CD4-positive, alpha-beta T cell (primary cell): ENCODE measurements at regions of chr9 and their contacts with region 1.

Region 1: DNA sequence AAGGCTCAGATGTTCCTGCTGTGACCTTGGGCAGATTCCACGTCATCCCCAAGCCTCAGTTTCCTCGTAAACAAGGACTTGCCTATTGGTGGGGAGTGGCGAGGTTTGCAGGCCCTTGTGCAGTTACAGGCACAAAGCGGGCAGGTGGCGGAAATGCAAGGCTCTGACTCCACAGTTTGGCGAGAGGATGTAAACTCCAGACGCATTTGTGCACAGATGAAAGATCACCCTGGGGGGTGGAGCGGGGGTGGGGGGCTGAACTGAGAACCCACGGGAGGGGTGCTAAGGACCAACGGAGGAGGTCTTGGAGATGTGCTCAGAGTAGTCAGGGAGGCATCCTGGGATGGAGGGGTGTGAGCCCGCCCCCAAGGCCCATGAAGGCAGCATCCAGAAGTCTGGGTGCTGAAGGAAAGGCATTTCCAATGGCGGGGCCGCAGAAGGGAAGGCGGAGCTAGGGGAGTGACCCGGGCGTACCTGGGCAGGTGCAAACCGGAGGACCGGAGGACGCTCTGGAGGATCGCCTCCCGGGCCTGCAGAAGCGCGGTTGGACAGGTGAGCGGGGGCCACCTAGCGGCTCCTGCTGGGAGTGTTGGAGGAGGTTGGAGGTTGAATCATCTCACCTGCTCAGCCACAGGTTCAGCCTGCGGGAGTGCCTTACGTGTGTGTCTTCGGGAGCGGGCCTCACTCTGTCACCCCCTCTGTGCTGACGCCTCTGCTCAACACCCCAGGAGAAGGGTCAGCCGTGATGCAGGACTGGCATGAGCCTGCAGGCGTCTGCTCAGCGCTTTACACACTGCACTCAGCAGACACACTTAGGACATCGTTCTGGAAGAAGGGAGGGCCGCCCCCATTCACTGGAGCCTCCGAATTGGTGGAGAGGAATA is 1.9 kb upstream of the FIBCD1 start:
- DNase-seq: peak; percentile 55 to 77 (median 66)
- ATAC-seq: peak; percentile 95
- H3K4me3 ChIP-seq: no peak overlapping the region
- H3K4me3 Mint-ChIP-seq: no peak overlapping the region
- H3K27ac ChIP-seq: no peak overlapping the region
- H3K27ac Mint-ChIP-seq: no peak overlapping the region
- H3K4me1 ChIP-seq: peaks cover 11% of the 10 kb centered on the region
- H3K4me1 Mint-ChIP-seq: peaks cover 9% of the 10 kb centered on the region
- H3K27me3 ChIP-seq: peaks cover 35 to 55% of the 10 kb centered on the region in 2 experiments
- H3K27me3 Mint-ChIP-seq: peaks cover 59% of the 10 kb centered on the region
- CTCF ChIP-seq: peak; percentile 89

Region 2: DNA sequence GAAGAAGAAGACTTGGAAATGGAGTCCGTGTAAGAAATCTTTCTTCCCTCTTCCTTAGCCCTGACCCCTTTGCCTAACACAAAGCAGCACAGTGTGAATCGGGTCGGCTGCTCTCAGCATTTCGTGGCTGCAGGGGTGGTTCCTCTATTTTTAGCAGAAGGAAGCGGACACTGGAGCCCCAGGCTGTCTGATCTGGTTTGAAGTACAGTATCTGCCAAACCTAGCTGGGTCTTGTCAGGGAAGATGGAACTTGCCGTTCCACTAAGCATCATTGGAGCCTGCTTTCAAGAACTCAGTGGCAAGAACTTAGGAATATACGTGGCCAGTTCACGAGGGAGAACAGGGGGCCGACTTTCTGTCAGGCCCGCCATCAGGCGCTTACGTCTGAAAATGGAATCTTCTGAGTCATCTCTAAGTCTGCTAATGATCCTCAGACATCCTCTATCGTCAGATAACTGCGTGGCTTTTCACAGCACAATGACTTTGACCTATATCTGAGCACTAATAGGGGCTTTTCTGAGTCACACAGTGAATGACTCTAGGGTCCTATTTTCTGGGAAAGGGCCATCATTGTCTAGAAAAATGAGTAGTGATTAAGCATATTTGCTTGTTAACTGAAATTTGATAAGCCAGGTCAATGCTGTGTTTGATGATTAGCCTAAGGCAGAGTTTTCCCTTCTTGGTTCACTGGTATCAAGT is 812.1 kb before region 1 on chr9:
- CTCF ChIA-PET with region 1: no interaction called
- POLR2A ChIA-PET with region 1: no interaction called
- intact Hi-C with region 1: no loop called
- DNase-seq: peak; percentile 17 to 86 (median 44)
- ATAC-seq: peak; percentile 60
- H3K4me3 ChIP-seq: peak overlapping the region; percentile 24
- H3K4me3 Mint-ChIP-seq: peak overlapping the region; percentile 71
- H3K27ac ChIP-seq: peak overlapping the region; percentile 83 to 95
- H3K27ac Mint-ChIP-seq: peak overlapping the region; percentile 98
- H3K4me1 ChIP-seq: peaks cover 60% of the 10 kb centered on the region
- H3K4me1 Mint-ChIP-seq: peaks cover 57% of the 10 kb centered on the region
- H3K27me3 ChIP-seq: no peaks in the 10 kb centered on the region
- H3K27me3 Mint-ChIP-seq: no peaks in the 10 kb centered on the region
- CTCF ChIP-seq: no peak

Region 3: GRCh38 chr9:130461218-130461630 is 479.7 kb before region 1 on chr9:
- CTCF ChIA-PET with region 1: no interaction called
- POLR2A ChIA-PET with region 1: no interaction called
- intact Hi-C with region 1: loop called in 1 of 2 experiments (anchors 1 kb)
- DNase-seq: peak; percentile 52 to 82 (median 66)
- ATAC-seq: peak; percentile 55
- H3K4me3 ChIP-seq: no peak overlapping the region
- H3K4me3 Mint-ChIP-seq: no peak overlapping the region
- H3K27ac ChIP-seq: no peak overlapping the region
- H3K27ac Mint-ChIP-seq: no peak overlapping the region
- H3K4me1 ChIP-seq: peaks cover 4% of the 10 kb centered on the region
- H3K4me1 Mint-ChIP-seq: no peaks in the 10 kb centered on the region
- H3K27me3 ChIP-seq: peaks cover 22 to 25% of the 10 kb centered on the region in 2 experiments
- H3K27me3 Mint-ChIP-seq: peaks cover 33% of the 10 kb centered on the region
- CTCF ChIP-seq: peak; percentile 90

Region 4: GRCh38 chr9:130607640-130608420 is 333.1 kb before region 1 on chr9:
- CTCF ChIA-PET with region 1: no interaction called
- POLR2A ChIA-PET with region 1: no interaction called
- intact Hi-C with region 1: no loop called
- DNase-seq: no peak
- ATAC-seq: no peak
- H3K4me3 ChIP-seq: no peak overlapping the region
- H3K4me3 Mint-ChIP-seq: no peak overlapping the region
- H3K27ac ChIP-seq: no peak overlapping the region
- H3K27ac Mint-ChIP-seq: no peak overlapping the region
- H3K4me1 ChIP-seq: no peaks in the 10 kb centered on the region
- H3K4me1 Mint-ChIP-seq: no peaks in the 10 kb centered on the region
- H3K27me3 ChIP-seq: no peaks in the 10 kb centered on the region
- H3K27me3 Mint-ChIP-seq: no peaks in the 10 kb centered on the region
- CTCF ChIP-seq: no peak

Region 5: GRCh38 chr9:130707225-130707976 is 233.5 kb before region 1 on chr9:
- CTCF ChIA-PET with region 1: no interaction called
- POLR2A ChIA-PET with region 1: interaction called, 4 read pairs
- intact Hi-C with region 1: loop called (anchors 1 kb)
- DNase-seq: peak; percentile 49 to 88 (median 68)
- ATAC-seq: peak; percentile 63
- H3K4me3 ChIP-seq: no peak overlapping the region
- H3K4me3 Mint-ChIP-seq: no peak overlapping the region
- H3K27ac ChIP-seq: no peak overlapping the region
- H3K27ac Mint-ChIP-seq: peak overlapping the region; percentile 2
- H3K4me1 ChIP-seq: peaks cover 5% of the 10 kb centered on the region
- H3K4me1 Mint-ChIP-seq: peaks cover 12% of the 10 kb centered on the region
- H3K27me3 ChIP-seq: no peaks in the 10 kb centered on the region
- H3K27me3 Mint-ChIP-seq: no peaks in the 10 kb centered on the region
- CTCF ChIP-seq: peak; percentile 87

Region 6: GRCh38 chr9:130770679-130771442 is 170.1 kb before region 1 on chr9:
- CTCF ChIA-PET with region 1: no interaction called
- POLR2A ChIA-PET with region 1: no interaction called
- intact Hi-C with region 1: loop called in 1 of 2 experiments (anchors 1 kb)
- DNase-seq: peak in 3 of 14 experiments; percentile 27 to 54 (median 50)
- ATAC-seq: peak; percentile 64
- H3K4me3 ChIP-seq: no peak overlapping the region
- H3K4me3 Mint-ChIP-seq: no peak overlapping the region
- H3K27ac ChIP-seq: no peak overlapping the region
- H3K27ac Mint-ChIP-seq: no peak overlapping the region
- H3K4me1 ChIP-seq: peaks cover 8% of the 10 kb centered on the region
- H3K4me1 Mint-ChIP-seq: peaks cover 43% of the 10 kb centered on the region
- H3K27me3 ChIP-seq: no peaks in the 10 kb centered on the region
- H3K27me3 Mint-ChIP-seq: no peaks in the 10 kb centered on the region
- CTCF ChIP-seq: peak; percentile 62

Region 7: DNA sequence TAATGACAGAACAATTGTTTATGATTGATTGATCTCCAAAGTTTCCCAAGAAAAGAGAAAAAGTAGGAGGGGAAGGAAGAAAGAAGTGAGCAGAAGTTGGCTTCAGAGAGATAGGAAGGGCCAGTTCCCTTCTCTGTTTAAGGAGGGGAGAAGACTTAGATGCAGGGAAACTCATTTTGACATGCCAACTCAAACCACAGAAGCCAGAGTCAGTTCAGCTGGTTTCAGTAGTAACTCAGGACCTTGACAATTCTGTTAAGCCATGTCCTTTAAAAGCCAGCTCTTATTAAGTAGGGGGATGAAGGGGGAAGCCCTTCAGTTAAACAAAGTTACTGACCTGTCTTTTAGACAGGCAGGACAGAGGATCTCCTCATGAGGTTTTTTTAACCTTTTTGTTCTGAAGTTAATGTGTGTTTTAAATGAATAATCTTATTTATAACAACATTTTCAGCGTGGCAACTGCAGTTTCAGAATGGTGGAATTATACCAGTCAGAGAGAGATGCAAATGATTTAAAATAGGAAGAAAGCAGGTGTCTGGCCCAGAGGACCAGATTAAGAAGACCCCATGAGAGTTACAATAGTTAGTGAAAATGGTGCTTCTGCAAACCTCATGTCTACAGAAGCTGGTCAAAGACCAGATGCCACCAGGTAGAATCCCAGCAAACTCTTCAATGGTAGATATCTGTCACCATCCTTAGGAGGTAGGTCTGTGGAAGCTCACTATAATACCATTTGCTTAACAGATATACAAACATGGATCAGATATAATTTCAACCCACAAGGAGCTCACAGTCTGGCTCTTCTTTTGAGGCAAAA is 135.2 kb before region 1 on chr9:
- CTCF ChIA-PET with region 1: no interaction called
- POLR2A ChIA-PET with region 1: no interaction called
- intact Hi-C with region 1: no loop called
- DNase-seq: no peak
- ATAC-seq: no peak
- H3K4me3 ChIP-seq: no peak overlapping the region
- H3K4me3 Mint-ChIP-seq: no peak overlapping the region
- H3K27ac ChIP-seq: no peak overlapping the region
- H3K27ac Mint-ChIP-seq: no peak overlapping the region
- H3K4me1 ChIP-seq: no peaks in the 10 kb centered on the region
- H3K4me1 Mint-ChIP-seq: peaks cover 4% of the 10 kb centered on the region
- H3K27me3 ChIP-seq: no peaks in the 10 kb centered on the region
- H3K27me3 Mint-ChIP-seq: no peaks in the 10 kb centered on the region
- CTCF ChIP-seq: no peak